H1 (cell line): ENCODE measurements at regions of chr5 and their contacts with region 1.

Region 1: GRCh38 chr5:8184455-8185063 is 315.6 kb downstream of the MTRR start:
- DNase-seq: peak; percentile 50 to 88
- H3K4me3 ChIP-seq: no peak overlapping the region
- H3K27ac ChIP-seq: no peak overlapping the region
- H3K4me1 ChIP-seq: peaks cover 0 to 5% (median 0%) of the 10 kb centered on the region in 4 experiments; a peak in 2 of 7 replicates
- H3K27me3 ChIP-seq: no peaks in the 10 kb centered on the region
- CTCF ChIP-seq: peak; percentile 69 to 96 (median 94)
- EP300 ChIP-seq: no peak
- POLR2A ChIP-seq: no peak
- RAD21 ChIP-seq: peak; percentile 73 to 77

Region 2: DNA sequence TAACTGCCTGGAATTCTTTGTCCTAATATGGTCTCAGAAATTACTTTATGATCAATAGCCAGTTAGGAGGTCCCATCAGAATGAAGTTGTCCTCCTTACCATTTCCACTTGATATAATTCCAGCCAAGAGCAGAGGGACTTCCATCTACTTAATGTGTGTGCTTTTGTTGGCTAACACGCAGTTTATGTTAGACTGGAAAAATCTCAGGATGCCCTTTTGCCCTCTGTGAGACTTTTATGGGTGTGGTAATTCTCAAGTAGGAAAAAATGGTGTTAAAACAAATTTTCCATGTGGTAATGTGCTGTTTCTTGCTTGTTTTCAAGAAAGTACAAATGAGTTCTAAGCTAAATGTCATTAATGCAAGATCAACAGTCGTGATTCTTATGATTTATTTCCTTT is 11.5 kb after region 1 on chr5:
- CTCF ChIA-PET with region 1: interaction called, 11 read pairs
- POLR2A ChIA-PET with region 1: no interaction called
- DNase-seq: no peak
- H3K4me3 ChIP-seq: no peak overlapping the region
- H3K27ac ChIP-seq: no peak overlapping the region
- H3K4me1 ChIP-seq: no peaks in the 10 kb centered on the region
- H3K27me3 ChIP-seq: no peaks in the 10 kb centered on the region
- CTCF ChIP-seq: no peak
- EP300 ChIP-seq: no peak
- POLR2A ChIP-seq: no peak
- RAD21 ChIP-seq: no peak